Activated B cell treated with CpG ODN at 0.5 μM for 24 hours (primary cell): ENCODE measurements at regions of chr3 and their contacts with region 1.

Region 1: DNA sequence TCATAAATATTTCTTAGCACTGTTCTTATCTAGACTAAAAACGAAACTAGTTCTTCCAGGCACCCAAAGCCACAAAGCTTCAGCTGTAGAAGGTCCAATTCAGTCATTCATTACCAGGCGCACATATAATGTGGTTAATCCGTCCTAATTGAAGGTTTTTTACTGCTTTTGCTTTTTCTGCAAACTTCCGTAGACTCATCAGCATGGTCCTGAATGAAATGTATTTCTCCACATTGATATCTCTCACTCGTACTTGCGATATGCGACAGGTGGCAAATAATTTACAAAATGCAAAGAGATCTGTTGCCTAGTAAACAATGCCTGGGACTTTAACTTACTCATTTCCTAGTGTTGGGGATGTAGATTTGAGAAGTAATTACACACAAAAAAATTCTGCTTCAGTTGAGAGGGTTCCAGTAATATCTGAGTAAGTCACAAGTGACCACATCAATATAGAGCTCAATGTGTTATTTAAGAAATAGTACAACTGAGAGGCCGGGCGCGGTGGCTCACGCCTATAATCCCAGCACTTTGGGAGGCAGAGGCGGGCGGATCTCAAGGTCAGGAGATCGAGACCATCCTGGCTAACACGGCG is 75.0 kb upstream of the MBNL1 start:
- DNase-seq: no peak
- ATAC-seq: peak; percentile 53
- H3K4me3 Mint-ChIP-seq: peak overlapping the region; percentile 73
- H3K27ac Mint-ChIP-seq: peak overlapping the region; percentile 78
- H3K4me1 Mint-ChIP-seq: peaks cover 77% of the 10 kb centered on the region
- H3K27me3 Mint-ChIP-seq: no peaks in the 10 kb centered on the region
- CTCF ChIP-seq: no peak

Region 2: GRCh38 chr3:151276687-151277042 is 917.1 kb before region 1 on chr3:
- CTCF ChIA-PET with region 1: no interaction called
- POLR2A ChIA-PET with region 1: no interaction called
- intact Hi-C with region 1: loop called (anchors 10 kb)
- DNase-seq: peak; percentile 33
- ATAC-seq: peak; percentile 77
- H3K4me3 Mint-ChIP-seq: peak overlapping the region; percentile 75
- H3K27ac Mint-ChIP-seq: peak overlapping the region; percentile 97
- H3K4me1 Mint-ChIP-seq: peaks cover 82% of the 10 kb centered on the region
- H3K27me3 Mint-ChIP-seq: no peaks in the 10 kb centered on the region
- CTCF ChIP-seq: no peak

Region 3: DNA sequence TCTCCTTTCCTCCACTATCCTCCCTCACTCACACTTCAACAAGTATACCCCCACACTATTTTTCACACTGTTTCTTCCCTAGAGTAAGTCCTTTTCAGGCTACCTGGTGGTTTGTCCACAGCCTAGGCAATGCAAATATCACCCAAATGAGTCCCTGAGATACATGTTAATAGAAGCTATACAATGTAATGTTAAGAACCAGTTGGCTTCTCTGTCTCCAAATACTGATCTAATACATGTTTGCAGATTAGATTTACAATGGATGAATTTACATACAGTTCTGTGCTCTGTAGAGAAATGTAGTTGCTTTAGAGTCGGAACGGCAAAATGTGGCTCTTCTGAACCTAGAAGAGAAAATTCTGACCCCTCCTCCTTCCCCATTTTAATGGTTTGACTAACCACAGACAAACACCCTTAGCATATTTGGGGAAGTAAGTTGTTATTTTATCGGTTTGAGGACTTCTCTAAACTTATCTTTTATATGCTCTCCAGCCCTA is 11.4 kb after region 1 on chr3:
- CTCF ChIA-PET with region 1: interaction called, 3 read pairs
- POLR2A ChIA-PET with region 1: interaction called, 53 read pairs
- intact Hi-C with region 1: loop called (anchors 1 kb)
- DNase-seq: no peak
- ATAC-seq: peak; percentile 72
- H3K4me3 Mint-ChIP-seq: peak overlapping the region; percentile 95
- H3K27ac Mint-ChIP-seq: peak overlapping the region; percentile 99
- H3K4me1 Mint-ChIP-seq: peaks cover 58% of the 10 kb centered on the region
- H3K27me3 Mint-ChIP-seq: no peaks in the 10 kb centered on the region
- CTCF ChIP-seq: no peak

Region 4: DNA sequence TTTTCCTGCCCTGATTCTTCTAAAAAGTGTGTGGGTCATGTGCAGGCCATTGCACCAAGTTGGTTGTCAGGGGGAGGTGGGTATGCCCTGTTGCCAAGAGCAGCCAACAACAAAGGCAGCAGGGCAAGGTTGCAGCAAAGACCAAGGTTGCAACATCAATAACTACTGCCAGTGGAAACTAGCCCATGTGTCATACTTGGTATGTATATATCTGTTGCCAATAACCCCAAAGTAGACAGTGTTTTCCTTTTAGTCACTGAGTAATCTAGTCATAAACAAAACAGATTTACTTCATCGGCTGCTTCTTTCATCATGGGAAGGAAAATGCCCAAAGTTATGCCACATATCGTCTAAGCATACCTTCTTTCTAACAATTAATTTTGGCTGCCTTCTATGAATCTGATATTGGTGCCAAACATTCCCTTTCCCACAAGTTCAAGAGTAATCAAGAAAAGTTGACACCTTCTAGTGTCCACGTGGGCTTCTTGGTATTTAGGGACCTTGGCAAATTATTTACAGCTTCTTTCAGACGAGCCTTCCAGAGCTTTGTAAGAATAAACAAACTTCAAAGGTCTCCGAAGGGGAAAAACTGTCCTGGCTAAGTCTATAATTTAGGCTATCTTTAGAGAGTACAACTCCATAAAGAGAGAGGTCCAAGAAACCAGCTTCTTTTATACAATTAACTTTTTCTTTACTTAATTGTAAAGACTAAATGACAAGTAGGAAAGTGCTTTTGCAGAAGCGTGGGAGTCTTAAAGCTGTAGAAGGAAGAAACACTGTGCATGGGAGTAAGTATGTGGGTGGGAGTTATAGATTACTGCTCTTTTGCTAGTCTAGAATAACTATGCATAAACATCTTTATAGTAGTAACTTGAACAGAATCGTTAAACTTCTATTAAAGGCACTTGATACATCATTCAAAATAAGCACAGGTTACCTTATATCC is 65.0 kb after region 1 on chr3:
- CTCF ChIA-PET with region 1: no interaction called
- POLR2A ChIA-PET with region 1: interaction called, 10 read pairs
- intact Hi-C with region 1: no loop called
- DNase-seq: no peak
- ATAC-seq: peak; percentile 23
- H3K4me3 Mint-ChIP-seq: peak overlapping the region; percentile 39
- H3K27ac Mint-ChIP-seq: peak overlapping the region; percentile 86
- H3K4me1 Mint-ChIP-seq: peaks cover 79% of the 10 kb centered on the region
- H3K27me3 Mint-ChIP-seq: no peaks in the 10 kb centered on the region
- CTCF ChIP-seq: no peak

Region 5: GRCh38 chr3:152508705-152509104 is 314.9 kb after region 1 on chr3:
- CTCF ChIA-PET with region 1: no interaction called
- POLR2A ChIA-PET with region 1: interaction called, 5 read pairs
- intact Hi-C with region 1: loop called (anchors 2 kb)
- DNase-seq: no peak
- ATAC-seq: no peak
- H3K4me3 Mint-ChIP-seq: peak overlapping the region; percentile 6
- H3K27ac Mint-ChIP-seq: peak overlapping the region; percentile 82
- H3K4me1 Mint-ChIP-seq: peaks cover 88% of the 10 kb centered on the region
- H3K27me3 Mint-ChIP-seq: no peaks in the 10 kb centered on the region
- CTCF ChIP-seq: no peak